Activated T-helper 2 cell treated with anti-CD3 and anti-CD28 coated beads, Interferon-gamma antibody, Interleukin-2, Interleukin-4, amounts not matched to agents 10 μg/mL and 5 μg/mL and 100 μg/mL, durations not matched to agents 14 hours and 24 hours and 36 hours (primary cell): ENCODE measurements at regions of chr6 and their contacts with region 1.

Region 1: DNA sequence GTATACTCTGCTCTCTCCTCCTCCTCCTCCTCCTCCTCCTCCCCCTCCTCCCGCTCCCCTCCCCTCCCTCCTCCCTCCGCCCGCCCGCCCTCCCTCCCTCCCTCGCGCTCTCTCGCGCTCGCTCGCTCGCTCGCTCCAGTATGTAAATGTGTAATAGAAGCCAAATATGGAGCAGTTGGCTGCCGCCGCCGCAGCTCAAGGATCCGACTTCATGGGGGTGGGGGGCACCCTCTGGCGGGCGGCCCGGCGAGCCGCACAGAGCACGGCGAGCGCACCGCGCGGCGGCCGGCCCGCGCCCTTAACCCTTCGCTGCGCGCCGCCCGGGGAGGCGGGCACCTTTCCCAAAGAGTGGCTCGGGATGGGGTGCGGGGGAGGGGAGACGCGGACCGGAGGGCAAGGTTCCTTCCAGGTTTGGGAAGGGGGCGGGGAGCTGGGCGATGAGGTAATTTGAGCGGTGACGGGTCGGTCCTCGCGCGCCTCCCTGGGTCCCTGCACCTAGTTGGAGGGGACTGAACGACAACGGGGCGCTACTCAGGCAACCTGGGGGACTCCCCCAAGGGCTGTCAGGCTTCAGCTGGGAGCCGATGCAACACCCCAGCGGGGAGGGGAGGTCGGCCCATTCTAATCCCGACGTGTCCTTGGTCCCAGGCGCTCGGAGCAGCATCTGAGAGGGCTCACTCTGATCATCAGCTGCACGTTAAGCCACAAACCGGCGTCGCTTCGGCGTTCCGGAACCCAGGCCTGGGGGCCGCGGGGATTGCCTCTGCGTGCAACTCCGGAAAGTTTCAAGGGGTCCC is 409 bp upstream of the ATXN1 start:
- DNase-seq: peak; percentile 83
- H3K4me3 Mint-ChIP-seq: peak overlapping the region; percentile 99
- H3K27ac Mint-ChIP-seq: peak overlapping the region; percentile 99
- H3K4me1 Mint-ChIP-seq: peaks cover 62% of the 10 kb centered on the region
- H3K27me3 Mint-ChIP-seq: no peaks in the 10 kb centered on the region

Region 2: GRCh38 chr6:16319813-16320532 is 441.7 kb before region 1 on chr6:
- intact Hi-C with region 1: loop called (anchors 1 kb)
- DNase-seq: peak; percentile 65
- H3K4me3 Mint-ChIP-seq: peak overlapping the region; percentile 60
- H3K27ac Mint-ChIP-seq: peak overlapping the region; percentile 84
- H3K4me1 Mint-ChIP-seq: peaks cover 68% of the 10 kb centered on the region
- H3K27me3 Mint-ChIP-seq: no peaks in the 10 kb centered on the region

Region 3: GRCh38 chr6:16481697-16482399 is 279.8 kb before region 1 on chr6:
- intact Hi-C with region 1: loop called (anchors 1 kb)
- DNase-seq: peak; percentile 71
- H3K4me3 Mint-ChIP-seq: peak overlapping the region; percentile 38
- H3K27ac Mint-ChIP-seq: peak overlapping the region; percentile 98
- H3K4me1 Mint-ChIP-seq: peaks cover 89% of the 10 kb centered on the region
- H3K27me3 Mint-ChIP-seq: no peaks in the 10 kb centered on the region

Region 4: GRCh38 chr6:16657768-16658167 is 103.9 kb before region 1 on chr6:
- intact Hi-C with region 1: loop called (anchors 1 kb)
- DNase-seq: no peak
- H3K4me3 Mint-ChIP-seq: peak overlapping the region; percentile 61
- H3K27ac Mint-ChIP-seq: peak overlapping the region; percentile 86
- H3K4me1 Mint-ChIP-seq: peaks cover 66% of the 10 kb centered on the region
- H3K27me3 Mint-ChIP-seq: no peaks in the 10 kb centered on the region

Region 5: DNA sequence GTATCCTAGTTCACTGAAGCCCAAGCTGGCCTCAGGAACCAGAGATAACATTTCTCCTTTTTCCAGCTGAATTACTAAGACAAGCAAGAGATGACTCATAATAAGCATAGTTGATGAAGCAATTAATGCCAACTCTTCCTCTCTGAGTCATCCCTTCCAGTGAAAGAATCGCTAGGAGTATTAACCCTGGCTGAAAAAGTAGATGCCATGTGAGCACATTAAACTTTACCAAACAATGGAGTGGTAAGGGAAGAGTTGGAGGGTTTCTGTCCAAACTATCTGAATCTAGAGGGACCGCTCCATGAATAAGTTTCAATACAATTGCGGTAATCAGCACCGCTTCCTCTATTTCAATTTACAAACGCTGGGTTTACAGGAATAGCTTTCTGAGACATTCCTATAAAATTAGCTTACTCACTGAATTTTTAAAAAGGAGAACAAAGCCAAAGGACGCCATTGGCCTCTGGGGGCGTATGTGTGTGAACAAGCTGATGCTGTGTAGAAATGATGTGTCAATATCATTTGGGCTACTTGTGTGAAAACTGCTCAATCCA is 48.7 kb before region 1 on chr6:
- intact Hi-C with region 1: loop called (anchors 1 kb)
- DNase-seq: no peak
- H3K4me3 Mint-ChIP-seq: peak overlapping the region; percentile 62
- H3K27ac Mint-ChIP-seq: peak overlapping the region; percentile 91
- H3K4me1 Mint-ChIP-seq: peaks cover 66% of the 10 kb centered on the region
- H3K27me3 Mint-ChIP-seq: no peaks in the 10 kb centered on the region

Region 6: GRCh38 chr6:16818992-16819626 is 57.4 kb after region 1 on chr6:
- intact Hi-C with region 1: no loop called
- DNase-seq: no peak
- H3K4me3 Mint-ChIP-seq: no peak overlapping the region
- H3K27ac Mint-ChIP-seq: no peak overlapping the region
- H3K4me1 Mint-ChIP-seq: no peaks in the 10 kb centered on the region
- H3K27me3 Mint-ChIP-seq: peaks cover 41% of the 10 kb centered on the region

Region 7: DNA sequence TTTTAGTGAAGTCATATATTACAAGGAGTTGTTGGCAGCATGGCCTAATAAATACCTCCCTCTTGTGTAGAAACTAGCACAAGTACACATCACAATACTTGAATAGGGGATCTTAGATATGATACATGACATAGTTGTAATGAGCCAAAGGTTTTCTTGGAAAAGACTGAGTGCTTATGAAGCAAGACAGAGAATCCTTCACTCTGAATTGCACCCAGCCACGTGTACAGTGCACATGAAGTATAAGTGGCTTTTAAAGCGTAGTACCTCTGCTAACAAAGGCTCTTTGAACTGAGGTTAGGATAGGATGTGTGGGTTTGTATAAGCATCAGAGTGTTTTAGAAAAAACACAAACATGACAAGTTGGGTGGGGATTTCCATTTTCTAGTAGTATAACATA is 194.7 kb after region 1 on chr6:
- intact Hi-C with region 1: loop called (anchors 1 kb)
- DNase-seq: no peak
- H3K4me3 Mint-ChIP-seq: no peak overlapping the region
- H3K27ac Mint-ChIP-seq: peak overlapping the region; percentile 81
- H3K4me1 Mint-ChIP-seq: peaks cover 43% of the 10 kb centered on the region
- H3K27me3 Mint-ChIP-seq: peaks cover 37% of the 10 kb centered on the region